A549 (cell line): ENCODE measurements at regions of chr10 and their contacts with region 1.

Region 1: DNA sequence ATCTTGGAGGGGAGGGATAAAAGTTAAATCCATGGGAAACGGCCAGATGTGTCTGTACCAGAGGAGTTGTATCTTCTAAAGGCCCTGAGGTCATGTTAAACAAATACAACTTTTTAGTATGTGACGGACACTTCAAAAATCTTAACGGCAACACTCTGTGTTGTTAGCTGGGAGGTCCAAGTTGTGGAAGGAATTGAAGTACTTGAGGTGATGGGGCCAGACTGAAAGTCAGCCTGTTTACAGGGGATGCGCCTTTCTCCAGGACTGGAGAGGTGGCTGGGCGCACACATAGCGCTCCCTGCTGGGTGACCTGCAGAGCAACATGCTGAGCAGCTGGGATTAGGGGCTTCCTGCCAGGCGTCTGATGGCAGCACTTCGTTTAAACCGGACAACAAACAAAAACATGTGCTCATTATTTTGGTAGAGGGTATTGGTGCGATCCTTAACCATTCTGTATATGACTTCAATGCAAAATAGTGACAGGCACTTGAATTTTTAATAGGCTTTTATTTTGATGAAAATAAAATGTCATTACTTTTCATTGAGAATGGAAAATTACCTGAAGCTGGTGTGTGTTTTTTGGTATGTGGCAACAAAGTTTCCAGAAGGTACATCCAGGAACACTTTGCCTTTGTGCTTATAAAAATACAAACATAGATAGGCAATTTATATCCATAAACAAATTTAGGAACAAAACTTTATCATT is 198.2 kb downstream of the MLLT10 start:
- DNase-seq: peak; percentile 74 to 87
- ATAC-seq: peak; percentile 95
- H3K4me3 ChIP-seq: no peak overlapping the region
- H3K27ac ChIP-seq: 0 out of 6 replicates have a peak overlapping the region, but pooled peaks of 1 of the 2 experiments have one; percentile 6
- H3K4me1 ChIP-seq: peaks cover 37% of the 10 kb centered on the region
- CTCF ChIP-seq: peak; percentile 86
- EP300 ChIP-seq: no peak
- POLR2A ChIP-seq: no peak
- RAD21 ChIP-seq: peak; percentile 92 to 93

Region 2: DNA sequence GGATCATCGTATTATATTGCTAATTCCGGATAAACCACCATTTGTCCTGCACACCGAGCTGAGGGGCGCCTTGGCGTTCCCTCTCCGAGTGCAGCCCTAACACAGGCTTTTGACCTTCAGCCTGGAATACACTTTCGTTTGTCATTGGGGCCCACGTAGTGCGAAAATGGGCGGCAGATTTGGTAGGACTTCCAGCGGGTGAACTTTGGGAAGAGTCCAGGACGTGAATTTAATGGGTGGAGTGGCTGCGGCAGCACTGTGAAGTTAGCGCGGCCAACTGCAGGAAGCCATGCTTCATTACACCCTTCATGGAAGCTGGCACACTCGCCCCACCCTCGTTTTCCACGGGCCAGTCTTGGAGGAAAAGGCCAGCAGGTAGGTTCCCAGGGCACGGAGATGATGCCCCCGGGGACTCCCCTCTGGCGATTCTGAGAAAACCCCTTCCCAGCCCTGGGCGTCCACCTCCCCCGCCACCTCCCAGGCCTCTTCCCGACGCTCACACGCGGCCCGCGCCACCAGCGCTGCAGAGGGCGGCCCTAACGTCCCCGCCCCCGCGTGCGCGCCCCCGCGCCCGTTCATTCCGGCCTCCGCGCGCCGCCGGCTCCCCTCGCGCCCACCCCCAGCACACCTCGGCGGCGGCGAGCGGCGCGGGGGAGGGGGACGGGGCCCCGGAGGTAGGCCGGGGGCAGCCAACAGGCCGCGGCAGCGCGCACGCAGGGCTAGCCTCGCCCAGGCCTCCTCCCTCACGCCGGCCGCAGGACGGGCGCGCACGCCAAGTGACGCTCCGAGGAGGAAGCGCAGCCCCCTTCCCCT is 198.5 kb before region 1 on chr10 and contains the start of gene MLLT10:
- CTCF ChIA-PET with region 1: interaction called, 11 read pairs
- POLR2A ChIA-PET with region 1: no interaction called
- DNase-seq: peak; percentile 73 to 96
- ATAC-seq: peak; percentile 85 to 87
- H3K4me3 ChIP-seq: peak within 1 kb of the TSS; percentile 92
- H3K27ac ChIP-seq: peak within 1 kb of the TSS; percentile 94 to 99
- H3K4me1 ChIP-seq: peaks cover 38% of the 10 kb centered on the region
- CTCF ChIP-seq: no peak
- EP300 ChIP-seq: no peak
- POLR2A ChIP-seq: peak; percentile 66
- RAD21 ChIP-seq: no peak; a peak in 3 of 5 replicates
- polyA plus RNA-seq, gene MLLT10: 54.1 and 55.5 TPM in 2 replicates

Region 3: GRCh38 chr10:21556527-21556926 is 175.7 kb before region 1 on chr10:
- CTCF ChIA-PET with region 1: interaction called, 11 read pairs
- POLR2A ChIA-PET with region 1: no interaction called
- DNase-seq: no peak
- ATAC-seq: no peak
- H3K4me3 ChIP-seq: no peak overlapping the region
- H3K27ac ChIP-seq: no peak overlapping the region
- H3K4me1 ChIP-seq: peaks cover 11% of the 10 kb centered on the region
- CTCF ChIP-seq: no peak
- EP300 ChIP-seq: no peak
- POLR2A ChIP-seq: no peak
- RAD21 ChIP-seq: no peak

Region 4: GRCh38 chr10:21668831-21669230 is 63.4 kb before region 1 on chr10:
- CTCF ChIA-PET with region 1: no interaction called
- POLR2A ChIA-PET with region 1: no interaction called
- DNase-seq: no peak
- ATAC-seq: no peak
- H3K4me3 ChIP-seq: no peak overlapping the region
- H3K27ac ChIP-seq: no peak overlapping the region
- H3K4me1 ChIP-seq: peaks cover 15% of the 10 kb centered on the region; the same call in 2 of the 3 replicates
- CTCF ChIP-seq: no peak
- EP300 ChIP-seq: no peak
- POLR2A ChIP-seq: no peak
- RAD21 ChIP-seq: no peak

Region 5: GRCh38 chr10:21746118-21746517 is 13.9 kb after region 1 on chr10:
- CTCF ChIA-PET with region 1: interaction called, 19 read pairs
- POLR2A ChIA-PET with region 1: no interaction called
- DNase-seq: no peak
- ATAC-seq: no peak
- H3K4me3 ChIP-seq: no peak overlapping the region
- H3K27ac ChIP-seq: no peak overlapping the region
- H3K4me1 ChIP-seq: no peaks in the 10 kb centered on the region
- CTCF ChIP-seq: no peak
- EP300 ChIP-seq: no peak
- POLR2A ChIP-seq: no peak
- RAD21 ChIP-seq: no peak